ENCODE measurements at regions of chr7 and their contacts with region 1.

Region 1: GRCh38 chr7:1432411-1433082 is 26.7 kb downstream of the MICALL2 start:
- DNase-seq: peak; percentile 74 to 82 (median 75)
- ATAC-seq: peak; percentile 90
- H3K4me3 ChIP-seq: no peak overlapping the region
- H3K27ac ChIP-seq: no peak overlapping the region
- H3K4me1 ChIP-seq: peaks cover 6 to 63% of the 10 kb centered on the region in 2 experiments; a peak in 3 of 5 replicates
- H3K27me3 ChIP-seq: no peaks in the 10 kb centered on the region
- CTCF ChIP-seq: peak; percentile 85 to 92 (median 87)
- EP300 ChIP-seq: no peak
- POLR2A ChIP-seq: peak; percentile 36; the same call in 1 of the 2 replicates
- RAD21 ChIP-seq: peak; percentile 38 to 66

Region 2: GRCh38 chr7:1193593-1194424 is 238.7 kb before region 1 on chr7:
- CTCF ChIA-PET with region 1: no interaction called
- POLR2A ChIA-PET with region 1: no interaction called
- in situ Hi-C with region 1: no loop called
- intact Hi-C with region 1: no loop called
- DNase-seq: no peak
- ATAC-seq: peak; percentile 29; the same call in 1 of the 3 replicates
- H3K4me3 ChIP-seq: no peak overlapping the region
- H3K27ac ChIP-seq: no peak overlapping the region
- H3K4me1 ChIP-seq: peaks cover 0 to 9% of the 10 kb centered on the region in 2 experiments; a peak in 2 of 5 replicates
- H3K27me3 ChIP-seq: peaks cover 41 to 69% of the 10 kb centered on the region in 2 experiments
- CTCF ChIP-seq: no peak; a peak in 1 of 6 replicates
- EP300 ChIP-seq: no peak
- POLR2A ChIP-seq: no peak
- RAD21 ChIP-seq: no peak

Region 3: DNA sequence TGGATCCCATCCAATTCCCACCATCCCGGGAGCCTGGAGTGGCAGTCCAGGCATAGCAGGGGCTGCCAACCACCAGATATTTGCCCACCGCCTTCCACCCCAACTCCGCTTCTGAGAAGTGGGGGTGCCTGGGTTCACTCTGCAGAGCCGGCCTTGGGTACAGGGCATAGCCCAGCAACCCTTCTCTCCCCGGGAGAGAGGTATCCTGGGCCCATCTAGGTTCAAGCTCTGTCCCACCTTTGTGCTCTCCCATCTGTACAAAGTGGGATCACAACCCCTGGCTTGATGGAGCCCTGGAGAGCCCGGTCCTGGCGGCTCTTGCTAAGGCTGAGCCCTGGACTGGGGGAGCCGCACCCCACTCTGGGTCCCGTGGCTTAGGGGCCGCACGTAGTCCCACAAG is 14.6 kb after region 1 on chr7:
- CTCF ChIA-PET with region 1: no interaction called
- POLR2A ChIA-PET with region 1: no interaction called
- in situ Hi-C with region 1: no loop called
- intact Hi-C with region 1: no loop called
- DNase-seq: no peak
- ATAC-seq: no peak; the same call in 1 of the 3 replicates
- H3K4me3 ChIP-seq: no peak overlapping the region
- H3K27ac ChIP-seq: no peak overlapping the region
- H3K4me1 ChIP-seq: peaks cover 0 to 76% of the 10 kb centered on the region in 2 experiments; a peak in 2 of 5 replicates
- H3K27me3 ChIP-seq: no peaks in the 10 kb centered on the region
- CTCF ChIP-seq: no peak
- EP300 ChIP-seq: no peak
- POLR2A ChIP-seq: no peak
- RAD21 ChIP-seq: no peak

Region 4: DNA sequence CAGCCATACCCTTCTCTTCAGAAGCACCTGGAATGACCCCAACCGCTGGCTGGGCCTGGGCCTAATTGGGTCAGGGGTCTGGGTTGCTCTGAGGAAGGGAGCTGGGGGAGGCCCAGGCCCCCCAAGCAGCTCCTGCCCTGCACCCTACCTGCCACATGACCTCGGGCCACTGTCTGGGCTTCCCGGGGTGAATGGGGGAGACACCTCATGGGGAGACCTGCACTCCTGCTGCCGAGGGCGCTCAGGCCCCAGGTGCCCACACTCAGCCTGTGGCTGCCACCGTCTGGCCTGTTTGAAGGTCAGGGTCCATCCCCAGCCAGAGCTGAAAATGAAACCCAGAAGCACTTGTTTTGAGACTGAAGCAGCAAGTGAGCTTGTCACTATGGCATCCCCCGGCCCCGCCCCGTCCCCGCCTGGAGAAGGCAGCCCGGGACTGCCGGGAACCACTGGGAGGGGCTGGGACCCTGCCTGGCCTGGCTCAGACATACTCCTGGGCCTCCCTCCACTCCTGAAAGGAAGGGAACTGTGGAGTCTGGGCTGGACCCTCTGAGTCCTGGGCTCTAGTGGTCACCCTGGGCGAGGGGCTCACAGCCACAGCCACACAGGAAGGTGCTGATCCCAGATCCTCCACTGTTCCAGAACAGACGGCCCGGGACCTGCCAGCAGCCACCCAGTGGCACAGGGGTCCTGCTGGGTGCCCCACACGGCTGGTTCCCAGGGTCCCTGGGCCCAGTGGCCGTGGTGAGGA is 34.2 kb after region 1 on chr7:
- CTCF ChIA-PET with region 1: no interaction called
- POLR2A ChIA-PET with region 1: no interaction called
- in situ Hi-C with region 1: loop called (anchors 5 kb)
- intact Hi-C with region 1: no loop called
- DNase-seq: peak; percentile 55 to 63 (median 62)
- ATAC-seq: peak; percentile 38
- H3K4me3 ChIP-seq: no peak overlapping the region
- H3K27ac ChIP-seq: no peak overlapping the region; the same call in 2 of the 3 replicates
- H3K4me1 ChIP-seq: peaks cover 20 to 81% of the 10 kb centered on the region in 2 experiments
- H3K27me3 ChIP-seq: no peaks in the 10 kb centered on the region
- CTCF ChIP-seq: peak in 2 of 3 experiments; percentile 5 to 28; a peak in 2 of 6 replicates
- EP300 ChIP-seq: no peak
- POLR2A ChIP-seq: no peak
- RAD21 ChIP-seq: peak in 1 of 2 experiments; percentile 19; a peak in 1 of 4 replicates

Region 5: DNA sequence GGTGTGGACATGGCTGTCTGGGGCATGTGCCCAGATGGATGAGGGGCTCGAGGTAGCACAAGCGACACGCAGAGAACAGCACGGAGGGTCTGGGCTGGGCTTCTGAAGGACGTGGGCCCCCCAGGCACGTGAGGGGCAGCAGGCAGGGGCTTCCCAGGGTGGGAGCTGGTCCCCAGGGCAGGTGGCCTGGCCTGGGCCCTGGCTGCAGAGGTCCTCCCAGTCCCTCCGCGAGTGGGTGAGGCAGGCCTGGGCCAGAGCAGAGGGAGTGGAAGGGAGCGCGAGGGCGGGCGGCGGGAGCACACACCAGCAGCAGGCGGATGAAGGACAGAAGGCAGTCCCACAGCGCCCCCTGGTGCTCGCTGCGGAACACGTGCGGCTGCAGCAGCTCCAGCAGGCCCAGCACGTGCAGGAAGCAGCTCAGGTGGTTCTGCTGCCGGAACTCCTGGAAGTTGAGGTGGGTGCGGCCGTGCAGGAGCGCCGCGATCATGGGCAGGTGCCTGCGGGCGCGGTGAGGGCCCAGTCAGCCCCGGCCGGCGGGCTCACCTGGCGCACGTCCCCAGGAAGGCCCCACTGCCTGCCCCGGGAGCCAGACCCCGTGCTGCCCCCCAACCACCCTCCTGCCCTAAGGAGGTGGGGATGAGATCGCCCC is 41.4 kb after region 1 on chr7:
- CTCF ChIA-PET with region 1: interaction called, 5 read pairs
- POLR2A ChIA-PET with region 1: no interaction called
- in situ Hi-C with region 1: loop called (anchors 5 kb)
- intact Hi-C with region 1: loop called (anchors 2 kb)
- DNase-seq: peak; percentile 86 to 93 (median 86)
- ATAC-seq: peak; percentile 98
- H3K4me3 ChIP-seq: no peak overlapping the region
- H3K27ac ChIP-seq: no peak overlapping the region
- H3K4me1 ChIP-seq: peaks cover 2 to 66% of the 10 kb centered on the region in 2 experiments; a peak in 3 of 5 replicates
- H3K27me3 ChIP-seq: no peaks in the 10 kb centered on the region
- CTCF ChIP-seq: peak; percentile 87 to 93 (median 92)
- EP300 ChIP-seq: no peak
- POLR2A ChIP-seq: peak; percentile 27; the same call in 1 of the 2 replicates
- RAD21 ChIP-seq: peak; percentile 89 to 95

Measured in K562 (cell line).